ENCODE measurements at regions of chr5 and their contacts with region 1.

Region 1: DNA sequence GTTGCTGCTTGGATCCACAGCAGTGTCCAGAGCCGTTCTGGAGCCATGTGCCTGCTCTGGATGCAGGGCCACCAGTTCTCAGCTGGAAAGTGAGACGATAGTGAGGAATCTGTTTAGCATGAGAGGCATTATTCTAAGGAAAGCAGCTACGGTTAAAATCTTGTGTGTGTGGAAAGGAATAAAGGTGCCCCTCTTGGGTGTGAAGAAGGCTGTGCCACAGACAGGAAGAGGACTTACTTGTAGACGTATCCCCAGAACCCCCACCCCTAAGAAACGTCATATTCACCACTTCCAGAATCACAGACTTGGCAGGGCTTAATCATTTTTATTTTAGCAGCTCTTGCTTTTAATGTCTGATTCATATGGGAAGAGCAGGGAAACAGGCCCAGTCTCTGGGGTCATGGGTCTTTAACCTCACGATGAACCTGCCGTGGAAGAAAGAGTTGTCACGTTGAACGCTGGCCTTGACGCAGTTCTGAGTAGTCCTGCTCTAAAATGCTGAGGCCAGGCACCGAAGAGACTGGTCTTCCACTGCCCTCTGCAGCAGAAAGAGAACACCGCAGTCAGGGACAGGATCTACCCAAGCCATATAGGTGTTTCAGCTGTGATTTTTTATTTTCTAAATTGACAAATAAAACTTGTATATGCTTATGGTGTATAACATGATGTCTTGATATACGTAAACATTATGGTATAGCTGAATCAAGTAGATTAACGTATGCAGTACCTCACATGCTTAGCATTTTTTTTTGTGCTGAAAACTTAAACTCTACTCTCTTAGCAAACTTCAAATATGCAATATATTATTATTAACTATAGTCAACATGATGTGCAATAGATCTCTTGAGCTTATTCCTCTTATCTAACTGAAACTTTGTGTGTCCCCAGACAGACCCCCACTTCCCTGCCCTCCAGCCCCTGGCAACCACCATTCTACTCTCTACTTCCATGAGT is 38.8 kb downstream of the CARTPT start:
- DNase-seq: peak in 1 of 2 donors; percentile 63
- ATAC-seq: peak; percentile 92 to 94 (median 93)
- H3K4me3 ChIP-seq: no peak overlapping the region
- H3K4me3 Mint-ChIP-seq: peak overlapping the region; percentile 35
- H3K27ac ChIP-seq: no peak overlapping the region
- H3K27ac Mint-ChIP-seq: peak overlapping the region in 1 of 2 donors; percentile 28
- H3K4me1 ChIP-seq: peaks cover 4% of the 10 kb centered on the region
- H3K4me1 Mint-ChIP-seq: peaks cover 9 to 10% of the 10 kb centered on the region in 2 donors
- H3K27me3 ChIP-seq: no peaks in the 10 kb centered on the region
- H3K27me3 Mint-ChIP-seq: no peaks in the 10 kb centered on the region
- CTCF ChIP-seq: peak; percentile 35

Region 2: DNA sequence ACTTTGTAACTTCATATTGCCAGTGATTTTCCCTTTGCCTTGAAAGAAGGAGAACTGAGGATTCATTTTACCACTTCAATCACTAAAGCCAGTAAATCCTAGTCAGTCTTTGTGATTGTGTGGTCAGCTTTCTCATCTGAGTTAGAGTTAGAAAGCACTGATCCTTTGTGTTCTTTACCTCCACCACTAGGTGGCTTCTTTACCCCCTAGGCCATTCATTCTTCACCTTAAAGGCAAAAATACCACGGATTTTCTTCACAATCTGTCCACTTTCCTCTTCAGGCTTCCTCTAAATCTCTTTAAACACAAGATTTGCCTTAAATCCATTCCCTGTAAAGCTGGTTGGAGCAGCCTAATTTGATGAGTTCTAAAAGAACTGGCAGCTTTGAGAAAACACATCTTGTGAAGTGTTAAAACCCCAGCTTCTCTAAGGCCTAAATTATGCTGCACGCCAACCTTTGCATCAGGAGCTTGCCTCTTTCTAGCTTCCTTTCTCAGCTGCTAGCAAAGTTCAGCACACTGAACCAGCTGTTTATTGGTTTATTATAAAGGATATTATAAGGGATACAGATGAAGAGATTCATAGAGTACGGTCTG is 282.0 kb before region 1 on chr5:
- intact Hi-C with region 1: loop called (anchors 5 kb)
- DNase-seq: peak in 1 of 2 donors; percentile 35
- ATAC-seq: peak in 2 of 3 donors; percentile 50 to 73
- H3K4me3 ChIP-seq: no peak overlapping the region
- H3K4me3 Mint-ChIP-seq: no peak overlapping the region
- H3K27ac ChIP-seq: no peak overlapping the region
- H3K27ac Mint-ChIP-seq: peak overlapping the region; percentile 43 to 64
- H3K4me1 ChIP-seq: no peaks in the 10 kb centered on the region
- H3K4me1 Mint-ChIP-seq: peaks cover 5 to 7% of the 10 kb centered on the region in 2 donors
- H3K27me3 ChIP-seq: no peaks in the 10 kb centered on the region
- H3K27me3 Mint-ChIP-seq: no peaks in the 10 kb centered on the region
- CTCF ChIP-seq: peak; percentile 58

Measured in natural killer cell (primary cell).